ENCODE measurements at regions of chr6 and their contacts with region 1.

Region 1: DNA sequence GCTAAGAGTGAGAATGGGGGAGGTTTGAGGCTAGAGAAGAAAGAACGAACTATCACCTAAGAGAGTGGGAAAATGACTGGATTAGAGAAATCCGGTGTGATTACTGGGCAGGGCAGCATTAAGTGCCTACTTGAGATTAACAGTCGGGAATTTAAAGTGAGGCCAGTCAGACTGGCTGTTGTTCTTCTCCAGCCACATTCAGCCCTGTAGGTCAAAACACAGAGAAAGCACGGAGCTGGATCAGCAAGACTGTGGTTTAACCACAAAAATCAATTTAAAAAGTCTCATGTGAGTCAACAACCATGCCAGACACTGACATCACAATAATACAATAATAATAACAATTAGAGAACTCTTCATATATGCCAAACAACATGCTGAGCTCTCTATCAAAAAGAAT is 301.9 kb upstream of the SGK1 start:
- DNase-seq: no peak
- H3K4me3 ChIP-seq: no peak overlapping the region
- H3K27ac ChIP-seq: peak overlapping the region in 3 of 59 donors; percentile 6 to 37 (median 24)
- H3K27me3 ChIP-seq: no peaks in the 10 kb centered on the region
- CTCF ChIP-seq: no peak

Region 2: DNA sequence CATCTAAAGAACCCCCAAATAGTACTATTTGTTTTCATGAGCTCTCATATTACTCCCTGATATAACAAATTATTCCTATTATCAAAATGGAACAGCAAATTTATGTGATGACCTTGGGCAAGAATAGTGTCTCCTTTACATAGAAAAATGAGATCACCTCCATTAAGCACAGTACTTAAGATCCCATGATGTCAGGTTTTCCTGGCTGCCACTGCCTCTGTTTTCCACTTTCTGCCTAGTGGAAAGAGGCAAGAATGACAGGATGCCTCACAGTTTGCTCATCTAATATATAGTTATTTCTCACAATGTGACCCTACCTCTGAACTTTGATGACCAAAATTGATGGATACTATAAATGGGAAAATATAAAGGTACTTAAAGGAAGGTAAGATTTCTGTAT is 41.8 kb before region 1 on chr6:
- intact Hi-C with region 1: loop called in 1 of 2 experiments (anchors 10 kb)
- DNase-seq: no peak
- H3K4me3 ChIP-seq: no peak overlapping the region
- H3K27ac ChIP-seq: no peak overlapping the region
- H3K27me3 ChIP-seq: no peaks in the 10 kb centered on the region
- CTCF ChIP-seq: peak in 1 of 56 donors; percentile 13

Region 3: GRCh38 chr6:134678436-134678889 is 58.7 kb after region 1 on chr6:
- intact Hi-C with region 1: no loop called
- DNase-seq: peak; percentile 31 to 84 (median 66)
- H3K4me3 ChIP-seq: no peak overlapping the region
- H3K27ac ChIP-seq: peak overlapping the region in 41 of 59 donors; percentile 6 to 74 (median 54)
- H3K27me3 ChIP-seq: no peaks in the 10 kb centered on the region
- CTCF ChIP-seq: no peak

Region 4: DNA sequence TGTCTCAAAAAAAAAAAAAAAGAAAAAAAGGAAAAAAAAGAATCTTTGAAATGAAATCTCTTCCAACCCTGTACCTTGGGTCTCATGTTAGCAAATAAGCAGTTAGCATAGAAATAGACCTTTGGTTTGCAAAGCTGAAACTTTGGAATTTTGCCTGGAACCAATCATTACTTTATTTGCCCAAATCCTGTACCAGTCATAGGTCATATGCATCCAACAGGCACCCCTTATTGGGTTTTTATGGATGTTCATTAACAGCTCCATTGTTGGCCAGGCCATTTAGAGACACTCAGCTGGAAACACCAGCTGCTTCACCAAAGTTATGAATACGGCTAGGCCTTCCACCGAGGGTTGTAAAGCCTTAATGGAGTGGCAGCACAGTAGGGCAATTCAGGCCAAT is 277.1 kb after region 1 on chr6:
- intact Hi-C with region 1: no loop called
- DNase-seq: no peak
- H3K4me3 ChIP-seq: no peak overlapping the region
- H3K27ac ChIP-seq: no peak overlapping the region
- H3K27me3 ChIP-seq: no peaks in the 10 kb centered on the region
- CTCF ChIP-seq: no peak

Measured in dorsolateral prefrontal cortex (tissue), 120 donors.